ENCODE measurements at regions of chr3 and their contacts with region 1.

Region 1: DNA sequence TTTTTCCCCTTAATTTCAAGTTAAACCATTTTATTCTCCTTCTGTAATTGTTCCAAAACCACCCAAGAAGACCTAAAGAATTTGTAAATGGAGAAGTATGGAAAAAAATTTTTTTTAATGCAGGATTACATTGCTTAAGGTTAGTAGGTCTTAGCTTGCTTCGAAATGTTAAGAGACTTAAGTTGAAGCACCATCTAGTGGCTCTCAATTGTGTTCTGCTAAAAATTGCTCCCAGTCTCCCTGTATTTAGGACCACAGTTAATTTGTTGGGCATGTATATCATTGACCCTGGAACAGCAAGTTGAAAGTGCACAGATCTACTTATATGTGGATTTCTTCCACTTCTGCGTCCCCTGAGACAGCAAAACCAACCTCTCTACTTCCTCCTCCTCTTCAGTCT is 32.4 kb downstream of the CD200R1L start:
- DNase-seq: no peak
- ATAC-seq: peak; percentile 12
- H3K4me3 ChIP-seq: no peak overlapping the region
- H3K4me1 ChIP-seq: no peaks in the 10 kb centered on the region
- CTCF ChIP-seq: no peak

Region 2: DNA sequence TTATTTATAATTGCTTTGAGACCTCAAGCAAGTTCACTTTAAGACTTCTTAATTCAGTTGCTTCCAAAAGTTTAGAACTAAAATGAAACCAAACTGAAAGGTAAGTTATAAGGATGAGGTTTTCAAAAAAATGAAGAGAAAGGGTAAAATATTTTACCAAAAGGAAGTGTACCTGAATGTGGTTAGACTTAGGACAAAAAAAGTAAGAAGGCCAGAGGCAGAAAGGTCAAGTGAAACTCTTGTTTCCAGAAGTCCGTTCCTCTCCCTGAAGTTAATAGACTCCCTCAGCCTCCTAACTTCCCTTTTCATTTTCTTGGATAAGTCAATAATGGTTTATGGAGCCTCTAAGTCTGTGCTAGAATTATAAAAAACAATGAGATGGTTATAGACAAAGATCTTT is 331.6 kb before region 1 on chr3:
- intact Hi-C with region 1: no loop called
- DNase-seq: no peak
- ATAC-seq: no peak
- H3K4me3 ChIP-seq: no peak overlapping the region
- H3K4me1 ChIP-seq: no peaks in the 10 kb centered on the region
- CTCF ChIP-seq: no peak

Region 3: DNA sequence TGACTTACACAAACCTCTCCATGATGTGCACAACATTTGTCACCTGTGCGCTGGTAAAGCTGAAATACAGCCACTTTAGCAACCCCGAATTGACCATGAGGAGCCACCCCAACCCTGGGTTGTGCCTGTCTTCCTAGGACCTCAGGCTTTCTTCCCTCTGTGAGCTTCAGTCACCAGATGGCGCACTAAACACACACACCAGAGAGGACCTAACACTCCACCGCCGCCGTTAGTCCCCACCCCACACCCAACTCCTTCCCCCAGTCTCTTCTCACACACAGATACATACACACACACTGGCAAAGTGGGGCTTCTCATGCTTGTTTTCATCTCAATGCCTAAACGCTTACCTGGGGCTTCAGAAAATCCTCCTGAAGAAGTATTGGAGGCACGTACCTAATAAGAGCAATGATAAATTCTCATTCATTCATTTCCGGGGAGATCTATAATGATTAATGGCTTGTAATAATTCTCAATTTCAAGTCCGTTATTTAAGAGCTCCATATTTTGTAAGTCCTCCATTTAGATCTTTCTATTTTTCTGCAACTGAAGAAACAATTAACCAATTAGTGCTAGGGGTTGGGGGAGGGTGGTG is 171.3 kb before region 1 on chr3:
- intact Hi-C with region 1: loop called in 1 of 2 experiments (anchors 5 kb)
- DNase-seq: peak; percentile 63 to 91 (median 70)
- ATAC-seq: peak; percentile 88
- H3K4me3 ChIP-seq: no peak overlapping the region
- H3K4me1 ChIP-seq: no peaks in the 10 kb centered on the region
- CTCF ChIP-seq: no peak

Region 4: DNA sequence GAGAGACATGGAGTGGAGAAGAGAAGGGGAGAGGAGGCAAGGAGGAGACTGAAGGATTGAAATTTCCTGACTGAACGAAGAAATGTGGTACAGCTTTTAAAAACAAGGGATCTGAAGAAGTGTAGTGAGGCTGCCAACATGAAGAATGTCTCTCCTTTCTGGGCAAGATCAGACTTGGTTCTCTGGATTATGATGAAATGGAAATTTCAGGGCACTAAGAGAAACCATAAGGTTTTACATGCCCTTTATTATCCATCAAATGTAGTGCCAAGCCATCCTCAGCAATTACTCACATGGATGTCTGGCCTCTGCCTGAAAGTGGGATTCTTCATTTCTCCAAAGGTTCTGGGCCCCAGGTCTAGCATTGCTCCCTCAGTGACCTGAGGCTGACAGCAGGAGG is 95.8 kb before region 1 on chr3:
- intact Hi-C with region 1: no loop called
- DNase-seq: no peak
- ATAC-seq: no peak
- H3K4me3 ChIP-seq: no peak overlapping the region
- H3K4me1 ChIP-seq: no peaks in the 10 kb centered on the region
- CTCF ChIP-seq: no peak

Measured in mucosa of descending colon (tissue), 3 donors.